Naive thymus-derived CD4-positive, alpha-beta T cell (primary cell): ENCODE measurements at regions of chr3 and their contacts with region 1.

Region 1: GRCh38 chr3:112293368-112294321 is at the start of gene SLC9C1:
- DNase-seq: peak in 7 of 9 donors; percentile 32 to 66 (median 49)
- ATAC-seq: peak; percentile 84
- H3K4me3 ChIP-seq: peak within 1 kb of the TSS; percentile 25
- H3K4me3 Mint-ChIP-seq: peak within 1 kb of the TSS; percentile 49 to 80 (median 70)
- H3K27ac ChIP-seq: no peak within 1 kb of the TSS
- H3K27ac Mint-ChIP-seq: peak within 1 kb of the TSS; percentile 4 to 83 (median 56)
- H3K4me1 ChIP-seq: no peaks in the 10 kb centered on the region
- H3K4me1 Mint-ChIP-seq: peaks cover 17 to 37% (median 27%) of the 10 kb centered on the region in 7 donors
- H3K27me3 ChIP-seq: no peaks in the 10 kb centered on the region
- H3K27me3 Mint-ChIP-seq: no peaks in the 10 kb centered on the region
- total RNA-seq, gene SLC9C1: not detected

Region 2: GRCh38 chr3:112111785-112112402 is 181.8 kb before region 1 on chr3:
- CTCF ChIA-PET with region 1: interaction called, 36 read pairs
- POLR2A ChIA-PET with region 1: no interaction called
- intact Hi-C with region 1: loop called (anchors 1 to 2 kb)
- DNase-seq: peak in 7 of 9 donors; percentile 52 to 75 (median 70)
- ATAC-seq: peak; percentile 96
- H3K4me3 ChIP-seq: no peak overlapping the region
- H3K4me3 Mint-ChIP-seq: peak overlapping the region in 1 of 10 donors; percentile 14
- H3K27ac ChIP-seq: no peak overlapping the region
- H3K27ac Mint-ChIP-seq: peak overlapping the region in 4 of 9 donors; percentile 28 to 48 (median 40)
- H3K4me1 ChIP-seq: no peaks in the 10 kb centered on the region
- H3K4me1 Mint-ChIP-seq: peaks cover 2 to 18% (median 9%) of the 10 kb centered on the region in 7 donors
- H3K27me3 ChIP-seq: no peaks in the 10 kb centered on the region
- H3K27me3 Mint-ChIP-seq: no peaks in the 10 kb centered on the region

Region 3: GRCh38 chr3:112136959-112137693 is 156.5 kb before region 1 on chr3:
- CTCF ChIA-PET with region 1: interaction called, 19 read pairs
- POLR2A ChIA-PET with region 1: interaction called, 3 read pairs
- intact Hi-C with region 1: loop called in 1 of 2 experiments (anchors 2 kb)
- DNase-seq: peak in 5 of 9 donors; percentile 42 to 55 (median 53)
- ATAC-seq: no peak
- H3K4me3 ChIP-seq: no peak overlapping the region
- H3K4me3 Mint-ChIP-seq: peak overlapping the region in 2 of 10 donors; percentile 3 to 21
- H3K27ac ChIP-seq: no peak overlapping the region
- H3K27ac Mint-ChIP-seq: peak overlapping the region in 8 of 9 donors; percentile 0 to 99 (median 96)
- H3K4me1 ChIP-seq: peaks cover 19 to 45% of the 10 kb centered on the region in 2 donors
- H3K4me1 Mint-ChIP-seq: peaks cover 31 to 76% (median 60%) of the 10 kb centered on the region in 7 donors
- H3K27me3 ChIP-seq: no peaks in the 10 kb centered on the region
- H3K27me3 Mint-ChIP-seq: no peaks in the 10 kb centered on the region

Region 4: GRCh38 chr3:112327371-112327951 is 33.8 kb after region 1 on chr3:
- CTCF ChIA-PET with region 1: interaction called, 5 read pairs
- POLR2A ChIA-PET with region 1: no interaction called
- intact Hi-C with region 1: loop called (anchors 1 kb)
- DNase-seq: peak in 7 of 9 donors; percentile 41 to 76 (median 66)
- ATAC-seq: peak; percentile 100
- H3K4me3 ChIP-seq: no peak overlapping the region
- H3K4me3 Mint-ChIP-seq: no peak overlapping the region
- H3K27ac ChIP-seq: no peak overlapping the region
- H3K27ac Mint-ChIP-seq: no peak overlapping the region
- H3K4me1 ChIP-seq: no peaks in the 10 kb centered on the region
- H3K4me1 Mint-ChIP-seq: peaks cover 0 to 8% (median 6%) of the 10 kb centered on the region in 7 donors
- H3K27me3 ChIP-seq: no peaks in the 10 kb centered on the region
- H3K27me3 Mint-ChIP-seq: peaks cover 0 to 20% (median 5%) of the 10 kb centered on the region in 5 donors

Region 5: GRCh38 chr3:112531358-112531781 is 237.7 kb after region 1 on chr3:
- CTCF ChIA-PET with region 1: interaction called, 15 read pairs
- POLR2A ChIA-PET with region 1: interaction called, 3 read pairs
- intact Hi-C with region 1: loop called (anchors 1 kb)
- DNase-seq: peak in 5 of 9 donors; percentile 25 to 40 (median 25)
- ATAC-seq: peak; percentile 45
- H3K4me3 ChIP-seq: no peak overlapping the region
- H3K4me3 Mint-ChIP-seq: no peak overlapping the region
- H3K27ac ChIP-seq: no peak overlapping the region
- H3K27ac Mint-ChIP-seq: peak overlapping the region in 6 of 9 donors; percentile 7 to 72 (median 14)
- H3K4me1 ChIP-seq: no peaks in the 10 kb centered on the region
- H3K4me1 Mint-ChIP-seq: peaks cover 0 to 5% (median 3%) of the 10 kb centered on the region in 7 donors
- H3K27me3 ChIP-seq: no peaks in the 10 kb centered on the region
- H3K27me3 Mint-ChIP-seq: no peaks in the 10 kb centered on the region